Endothelial cell of umbilical vein (primary cell): ENCODE measurements at regions of chr9 and their contacts with region 1.

Region 1: GRCh38 chr9:95726756-95727155 is 148.7 kb upstream of the ERCC6L2 start:
- DNase-seq: peak; percentile 57
- H3K4me3 ChIP-seq: no peak overlapping the region
- H3K27ac ChIP-seq: no peak overlapping the region
- H3K4me1 ChIP-seq: no peaks in the 10 kb centered on the region
- H3K27me3 ChIP-seq: no peaks in the 10 kb centered on the region
- CTCF ChIP-seq: peak; percentile 56 to 67
- POLR2A ChIP-seq: no peak

Region 2: GRCh38 chr9:95801797-95802196 is 75.0 kb after region 1 on chr9:
- CTCF ChIA-PET with region 1: interaction called, 11 read pairs
- POLR2A ChIA-PET with region 1: no interaction called
- dilution Hi-C with region 1: no loop called
- intact Hi-C with region 1: no loop called
- DNase-seq: peak; percentile 67
- H3K4me3 ChIP-seq: peak overlapping the region in 1 of 3 experiments; percentile 12
- H3K27ac ChIP-seq: peak overlapping the region; percentile 59
- H3K4me1 ChIP-seq: peaks cover 25% of the 10 kb centered on the region
- H3K27me3 ChIP-seq: no peaks in the 10 kb centered on the region
- CTCF ChIP-seq: no peak
- POLR2A ChIP-seq: no peak

Region 3: DNA sequence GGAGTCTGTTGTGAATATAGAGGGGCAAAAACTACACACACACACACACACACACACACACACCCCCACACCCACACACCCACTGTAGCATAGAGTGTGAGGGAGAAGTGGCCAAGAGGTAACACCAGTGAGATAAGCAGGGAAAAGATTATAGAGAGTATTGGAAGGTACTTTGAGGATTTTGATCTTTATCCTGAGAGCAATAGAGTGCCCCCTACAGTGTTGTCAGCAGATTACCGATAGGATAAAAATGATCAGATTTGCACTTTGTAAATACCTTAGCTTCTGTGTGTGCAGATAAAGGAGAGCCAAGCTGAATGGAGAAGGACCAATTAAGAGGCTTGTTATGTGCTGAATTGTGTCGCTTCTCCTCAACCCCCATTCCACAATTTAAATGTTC is 181.0 kb after region 1 on chr9:
- CTCF ChIA-PET with region 1: interaction called, 14 read pairs
- POLR2A ChIA-PET with region 1: no interaction called
- dilution Hi-C with region 1: no loop called
- intact Hi-C with region 1: no loop called
- DNase-seq: no peak
- H3K4me3 ChIP-seq: no peak overlapping the region
- H3K27ac ChIP-seq: no peak overlapping the region
- H3K4me1 ChIP-seq: peaks cover 6% of the 10 kb centered on the region
- H3K27me3 ChIP-seq: no peaks in the 10 kb centered on the region
- CTCF ChIP-seq: peak in 1 of 2 donors; percentile 18
- POLR2A ChIP-seq: no peak

Region 4: DNA sequence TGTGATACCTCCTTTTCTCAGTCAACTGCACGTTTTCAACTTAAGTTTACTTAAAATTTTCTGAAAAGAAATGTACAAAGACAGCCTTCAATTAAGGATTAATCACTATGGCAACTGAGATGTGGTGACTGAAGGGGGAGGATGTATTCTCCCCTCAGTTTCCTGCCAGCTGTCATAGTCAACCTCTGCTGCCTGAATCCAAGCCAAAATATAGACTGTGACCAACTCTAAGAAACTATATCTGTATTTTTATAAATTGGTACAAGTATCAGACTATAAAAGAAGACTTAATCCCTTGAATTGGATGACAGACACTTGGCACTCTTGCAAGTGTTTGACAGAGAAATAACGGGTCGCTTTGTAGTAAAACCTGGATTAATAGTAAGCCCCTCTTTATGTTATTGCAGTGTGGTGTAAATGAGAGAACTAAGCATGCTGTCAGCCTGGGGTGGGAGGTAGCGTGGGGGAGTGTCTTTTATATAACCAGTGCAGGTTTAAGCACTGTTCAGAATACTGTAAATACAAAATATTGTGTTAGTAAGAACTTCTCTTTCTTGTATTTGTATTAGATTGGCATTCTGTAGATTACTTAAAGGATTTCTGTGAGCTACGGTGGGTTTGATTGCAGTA is 255.1 kb after region 1 on chr9:
- CTCF ChIA-PET with region 1: no interaction called
- POLR2A ChIA-PET with region 1: no interaction called
- dilution Hi-C with region 1: no loop called
- intact Hi-C with region 1: loop called (anchors 10 kb)
- DNase-seq: peak; percentile 3
- H3K4me3 ChIP-seq: no peak overlapping the region
- H3K27ac ChIP-seq: no peak overlapping the region
- H3K4me1 ChIP-seq: no peaks in the 10 kb centered on the region
- H3K27me3 ChIP-seq: no peaks in the 10 kb centered on the region
- CTCF ChIP-seq: no peak
- POLR2A ChIP-seq: no peak

Region 5: DNA sequence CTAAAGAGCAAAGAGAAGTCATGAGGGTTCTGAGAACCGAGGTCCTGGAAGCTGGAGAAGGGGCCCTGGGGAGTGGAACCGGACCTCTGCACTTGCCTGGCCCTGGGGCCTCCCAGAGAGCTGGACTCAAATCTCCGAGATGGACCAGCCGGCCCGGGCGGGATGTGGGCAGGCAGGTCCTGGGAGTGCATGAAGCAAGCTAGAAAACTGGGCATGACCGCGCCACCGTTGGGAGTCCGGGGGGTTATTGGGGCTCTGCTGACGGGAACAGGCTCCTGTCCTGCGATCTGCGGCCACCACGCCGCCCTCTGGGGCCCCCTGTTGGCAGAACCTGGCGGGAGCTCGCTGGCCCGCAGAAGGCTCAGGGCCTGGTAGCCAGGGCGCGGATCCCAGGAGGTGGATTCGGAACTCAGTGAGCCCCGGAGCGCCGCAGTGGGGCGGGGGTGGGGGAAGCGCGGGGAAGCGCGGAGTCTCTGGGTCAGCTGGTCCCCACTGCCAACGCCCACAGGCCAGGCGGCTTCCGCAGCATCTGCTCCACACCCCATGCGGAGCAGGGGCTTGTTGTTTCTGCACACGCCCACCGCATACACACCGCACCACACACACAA is 299.3 kb after region 1 on chr9:
- CTCF ChIA-PET with region 1: interaction called, 3 read pairs
- POLR2A ChIA-PET with region 1: no interaction called
- dilution Hi-C with region 1: no loop called
- intact Hi-C with region 1: loop called (anchors 1 kb)
- DNase-seq: no peak
- H3K4me3 ChIP-seq: no peak overlapping the region
- H3K27ac ChIP-seq: no peak overlapping the region
- H3K4me1 ChIP-seq: peaks cover 4% of the 10 kb centered on the region
- H3K27me3 ChIP-seq: peaks cover 34 to 40% of the 10 kb centered on the region in 2 experiments
- CTCF ChIP-seq: peak; percentile 11 to 30
- POLR2A ChIP-seq: no peak

Region 6: DNA sequence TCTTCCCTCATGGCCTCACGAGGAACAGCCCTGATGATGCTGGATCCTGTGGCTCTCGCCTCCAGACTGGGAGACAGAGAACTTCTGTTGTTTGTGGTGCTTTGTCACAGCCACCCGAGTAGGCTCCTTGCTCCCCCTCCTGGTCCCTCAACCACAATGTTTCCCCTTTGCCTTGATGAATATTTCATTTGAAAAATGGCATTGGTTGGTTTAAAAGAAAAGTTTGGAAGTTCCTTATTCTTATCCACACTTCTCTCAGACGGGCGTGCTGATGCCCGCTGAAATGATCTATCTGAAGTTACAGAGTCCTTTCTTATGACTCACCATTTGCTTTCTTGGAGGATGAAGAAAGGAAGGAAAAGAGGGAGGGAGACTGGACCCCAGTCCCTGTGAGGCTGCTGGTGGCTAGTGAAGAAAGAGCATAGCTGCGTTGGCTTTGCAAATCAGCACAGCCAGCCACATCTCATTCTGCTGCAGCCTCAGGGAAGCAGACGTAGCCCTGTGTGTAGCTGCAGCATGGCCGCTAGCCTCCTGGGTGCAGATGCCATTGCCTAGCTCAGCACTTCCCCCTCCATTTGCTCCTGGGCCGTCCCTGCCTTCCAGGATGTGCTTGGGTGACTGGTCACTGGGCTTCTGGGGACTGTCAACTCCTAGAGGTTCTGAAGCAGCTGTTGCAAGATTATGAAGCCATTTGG is 334.7 kb after region 1 on chr9:
- CTCF ChIA-PET with region 1: interaction called, 10 read pairs
- POLR2A ChIA-PET with region 1: no interaction called
- dilution Hi-C with region 1: no loop called
- intact Hi-C with region 1: loop called (anchors 1 kb)
- DNase-seq: peak; percentile 65
- H3K4me3 ChIP-seq: no peak overlapping the region
- H3K27ac ChIP-seq: no peak overlapping the region
- H3K4me1 ChIP-seq: peaks cover 9% of the 10 kb centered on the region
- H3K27me3 ChIP-seq: no peaks in the 10 kb centered on the region
- CTCF ChIP-seq: peak; percentile 55 to 57
- POLR2A ChIP-seq: no peak